ENCODE measurements at regions of chr2 and their contacts with region 1.

Region 1: GRCh38 chr2:50492477-50492851 is 539.5 kb downstream of the NRXN1 start:
- DNase-seq: peak; percentile 57
- H3K4me3 ChIP-seq: peak overlapping the region in 1 of 2 experiments; percentile 11; a peak in 2 of 4 replicates
- H3K27ac ChIP-seq: no peak overlapping the region
- H3K4me1 ChIP-seq: no peaks in the 10 kb centered on the region; a peak in 1 of 4 replicates
- H3K27me3 ChIP-seq: no peaks in the 10 kb centered on the region; the same call in 1 of the 2 replicates
- CTCF ChIP-seq: peak; percentile 77
- EP300 ChIP-seq: no peak
- RAD21 ChIP-seq: peak; percentile 87

Region 2: DNA sequence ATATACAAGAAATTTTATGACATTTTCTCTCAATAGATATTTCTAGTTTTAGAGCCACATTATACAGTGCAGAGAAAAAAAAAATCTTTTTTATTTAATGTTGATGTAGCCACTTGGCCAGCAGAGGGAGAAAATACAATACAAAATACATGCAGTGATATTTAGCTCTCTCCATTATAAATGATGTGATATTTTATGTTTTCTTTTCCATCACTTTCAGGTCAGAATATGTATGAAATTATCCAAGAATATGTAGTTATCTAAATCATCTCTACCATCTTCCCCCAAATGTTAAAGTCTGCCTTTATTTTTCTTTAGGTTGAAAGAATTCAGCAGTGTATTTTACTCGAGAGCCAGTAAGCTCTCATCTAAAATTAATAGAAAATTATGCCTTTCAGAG is 804.5 kb before region 1 on chr2:
- CTCF ChIA-PET with region 1: interaction called, 10 read pairs
- POLR2A ChIA-PET with region 1: no interaction called
- DNase-seq: no peak
- H3K4me3 ChIP-seq: peak overlapping the region in 1 of 2 experiments; percentile 16; a peak in 1 of 4 replicates
- H3K27ac ChIP-seq: no peak overlapping the region
- H3K4me1 ChIP-seq: no peaks in the 10 kb centered on the region
- H3K27me3 ChIP-seq: no peaks in the 10 kb centered on the region
- CTCF ChIP-seq: peak; percentile 60
- EP300 ChIP-seq: no peak
- RAD21 ChIP-seq: peak; percentile 67

Region 3: DNA sequence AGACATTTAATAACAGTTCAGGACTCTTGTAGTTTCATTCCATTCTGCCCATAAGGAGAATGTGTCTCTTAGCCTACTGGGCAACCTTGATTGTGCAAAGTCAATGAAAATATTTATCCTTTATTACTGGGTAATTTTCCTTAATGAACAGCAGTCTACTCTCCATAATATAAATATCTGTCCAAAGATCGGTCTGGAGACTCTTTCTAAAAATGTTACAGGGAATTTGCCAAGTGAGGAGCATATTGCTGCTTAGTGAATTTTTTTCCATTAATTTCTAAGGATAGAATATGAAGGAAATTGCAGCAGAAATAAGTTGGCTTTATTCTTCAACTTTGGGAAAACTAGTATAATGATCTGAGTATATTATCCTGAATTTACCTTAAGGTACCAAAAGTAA is 521.0 kb before region 1 on chr2:
- CTCF ChIA-PET with region 1: no interaction called
- POLR2A ChIA-PET with region 1: no interaction called
- DNase-seq: no peak
- H3K4me3 ChIP-seq: no peak overlapping the region
- H3K27ac ChIP-seq: no peak overlapping the region
- H3K4me1 ChIP-seq: peaks cover 0 to 8% of the 10 kb centered on the region in 2 experiments; a peak in 3 of 4 replicates
- H3K27me3 ChIP-seq: no peaks in the 10 kb centered on the region
- CTCF ChIP-seq: no peak
- EP300 ChIP-seq: no peak
- RAD21 ChIP-seq: no peak

Region 4: GRCh38 chr2:50347358-50348044 is 145.0 kb before region 1 on chr2:
- CTCF ChIA-PET with region 1: interaction called, 11 read pairs
- POLR2A ChIA-PET with region 1: no interaction called
- DNase-seq: peak; percentile 69
- H3K4me3 ChIP-seq: peak overlapping the region in 1 of 2 experiments; percentile 43; a peak in 3 of 4 replicates
- H3K27ac ChIP-seq: no peak overlapping the region
- H3K4me1 ChIP-seq: peaks cover 0 to 6% of the 10 kb centered on the region in 2 experiments; a peak in 2 of 4 replicates
- H3K27me3 ChIP-seq: peaks cover 9% of the 10 kb centered on the region
- CTCF ChIP-seq: no peak
- EP300 ChIP-seq: no peak
- RAD21 ChIP-seq: no peak

Region 5: GRCh38 chr2:50455351-50455939 is 37.0 kb before region 1 on chr2:
- CTCF ChIA-PET with region 1: interaction called, 20 read pairs
- POLR2A ChIA-PET with region 1: no interaction called
- DNase-seq: no peak
- H3K4me3 ChIP-seq: no peak overlapping the region
- H3K27ac ChIP-seq: peak overlapping the region in 1 of 2 experiments; percentile 75; a peak in 2 of 4 replicates
- H3K4me1 ChIP-seq: peaks cover 0 to 4% of the 10 kb centered on the region in 2 experiments; a peak in 2 of 4 replicates
- H3K27me3 ChIP-seq: no peaks in the 10 kb centered on the region
- CTCF ChIP-seq: no peak
- EP300 ChIP-seq: peak in 1 of 2 experiments; percentile 90; a peak in 2 of 4 replicates
- RAD21 ChIP-seq: no peak

Region 6: GRCh38 chr2:50476174-50476573 is 16.3 kb before region 1 on chr2:
- CTCF ChIA-PET with region 1: interaction called, 21 read pairs
- POLR2A ChIA-PET with region 1: no interaction called
- DNase-seq: no peak
- H3K4me3 ChIP-seq: no peak overlapping the region
- H3K27ac ChIP-seq: no peak overlapping the region
- H3K4me1 ChIP-seq: no peaks in the 10 kb centered on the region
- H3K27me3 ChIP-seq: no peaks in the 10 kb centered on the region
- CTCF ChIP-seq: no peak; the same call in 1 of the 2 replicates
- EP300 ChIP-seq: no peak
- RAD21 ChIP-seq: no peak

Region 7: DNA sequence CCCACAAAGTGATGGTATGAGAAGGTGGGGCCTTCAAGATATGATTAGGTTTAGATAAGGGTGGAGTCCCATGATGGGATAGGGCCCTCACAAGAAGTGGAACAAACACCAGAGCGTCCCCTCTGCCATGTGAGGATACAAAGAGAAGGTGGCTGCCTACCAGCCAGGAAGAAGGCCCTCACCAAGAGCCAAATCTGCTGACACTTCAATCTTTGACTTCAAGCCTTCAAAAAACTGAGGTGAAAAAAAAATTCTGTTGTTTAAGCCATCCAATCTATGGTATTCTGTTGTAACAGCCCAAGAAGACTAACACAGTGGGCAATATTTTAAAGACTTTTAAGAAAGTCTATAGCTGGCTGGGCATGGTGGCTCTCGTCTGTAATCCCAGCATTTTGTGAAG is 17.4 kb after region 1 on chr2:
- CTCF ChIA-PET with region 1: interaction called, 10 read pairs
- POLR2A ChIA-PET with region 1: no interaction called
- DNase-seq: no peak
- H3K4me3 ChIP-seq: no peak overlapping the region
- H3K27ac ChIP-seq: no peak overlapping the region
- H3K4me1 ChIP-seq: no peaks in the 10 kb centered on the region
- H3K27me3 ChIP-seq: no peaks in the 10 kb centered on the region
- CTCF ChIP-seq: no peak
- EP300 ChIP-seq: no peak
- RAD21 ChIP-seq: no peak